ENCODE measurements at regions of chr11 and their contacts with region 1.

Region 1: GRCh38 chr11:86162239-86162638 is 82.3 kb upstream of the EED start:
- H3K4me3 Mint-ChIP-seq: no peak overlapping the region
- H3K27ac Mint-ChIP-seq: peak overlapping the region; percentile 97
- H3K4me1 Mint-ChIP-seq: peaks cover 84% of the 10 kb centered on the region
- H3K27me3 Mint-ChIP-seq: no peaks in the 10 kb centered on the region

Region 2: GRCh38 chr11:86174101-86175046 is 12.1 kb after region 1 on chr11:
- intact Hi-C with region 1: loop called (anchors 2 kb)
- H3K4me3 Mint-ChIP-seq: no peak overlapping the region
- H3K27ac Mint-ChIP-seq: no peak overlapping the region
- H3K4me1 Mint-ChIP-seq: peaks cover 11% of the 10 kb centered on the region
- H3K27me3 Mint-ChIP-seq: no peaks in the 10 kb centered on the region

Region 3: DNA sequence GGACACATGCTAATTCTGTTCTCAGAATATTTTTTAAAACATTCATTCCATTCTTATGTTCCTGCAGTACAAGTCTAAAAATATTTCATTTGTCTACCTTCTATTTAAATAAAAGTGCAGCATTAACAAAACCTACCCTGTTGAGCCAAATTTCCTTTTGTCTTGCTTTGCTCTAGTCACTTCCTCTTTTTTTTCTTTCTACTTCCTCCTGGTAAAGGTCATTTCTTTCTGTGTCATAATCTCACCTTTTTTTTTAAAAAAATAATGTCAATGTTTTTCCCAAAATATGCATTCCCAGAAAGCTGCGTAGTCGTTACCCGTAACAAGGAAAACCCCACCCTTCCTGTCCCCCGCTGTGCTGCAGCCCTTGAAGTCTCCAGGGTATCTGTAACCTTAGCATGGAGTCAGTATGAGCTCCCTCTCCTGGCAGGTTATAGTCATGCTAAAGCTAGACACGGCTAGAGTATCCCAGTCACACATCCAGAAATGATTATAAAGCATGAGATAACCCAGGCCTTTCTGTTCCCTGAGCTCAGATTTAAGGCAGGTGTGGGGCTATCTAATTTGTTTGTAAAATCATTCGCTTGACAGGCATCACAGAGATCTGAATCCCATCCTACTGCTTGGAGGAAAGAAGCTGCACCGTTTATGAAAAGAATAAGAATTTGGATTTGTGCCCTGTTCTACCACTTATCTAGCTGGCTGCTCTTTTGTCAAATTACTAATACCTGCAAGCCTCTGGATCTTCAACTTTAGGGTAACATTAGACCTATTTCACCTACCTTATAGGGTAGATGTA is 31.3 kb after region 1 on chr11:
- intact Hi-C with region 1: loop called (anchors 5 kb)
- H3K4me3 Mint-ChIP-seq: no peak overlapping the region
- H3K27ac Mint-ChIP-seq: peak overlapping the region; percentile 77
- H3K4me1 Mint-ChIP-seq: peaks cover 73% of the 10 kb centered on the region
- H3K27me3 Mint-ChIP-seq: no peaks in the 10 kb centered on the region

Measured in dendritic cell treated with granulocyte-macrophage colony-stimulating factor and Interleukin-4, amounts not matched to agents 40 ng/mL and 50 ng/mL, for 4 days (primary cell).